ENCODE measurements at regions of chr20 and their contacts with region 1.

Region 1: GRCh38 chr20:736897-737296 is 31.4 kb downstream of the SLC52A3 start:
- DNase-seq: no peak

Region 2: DNA sequence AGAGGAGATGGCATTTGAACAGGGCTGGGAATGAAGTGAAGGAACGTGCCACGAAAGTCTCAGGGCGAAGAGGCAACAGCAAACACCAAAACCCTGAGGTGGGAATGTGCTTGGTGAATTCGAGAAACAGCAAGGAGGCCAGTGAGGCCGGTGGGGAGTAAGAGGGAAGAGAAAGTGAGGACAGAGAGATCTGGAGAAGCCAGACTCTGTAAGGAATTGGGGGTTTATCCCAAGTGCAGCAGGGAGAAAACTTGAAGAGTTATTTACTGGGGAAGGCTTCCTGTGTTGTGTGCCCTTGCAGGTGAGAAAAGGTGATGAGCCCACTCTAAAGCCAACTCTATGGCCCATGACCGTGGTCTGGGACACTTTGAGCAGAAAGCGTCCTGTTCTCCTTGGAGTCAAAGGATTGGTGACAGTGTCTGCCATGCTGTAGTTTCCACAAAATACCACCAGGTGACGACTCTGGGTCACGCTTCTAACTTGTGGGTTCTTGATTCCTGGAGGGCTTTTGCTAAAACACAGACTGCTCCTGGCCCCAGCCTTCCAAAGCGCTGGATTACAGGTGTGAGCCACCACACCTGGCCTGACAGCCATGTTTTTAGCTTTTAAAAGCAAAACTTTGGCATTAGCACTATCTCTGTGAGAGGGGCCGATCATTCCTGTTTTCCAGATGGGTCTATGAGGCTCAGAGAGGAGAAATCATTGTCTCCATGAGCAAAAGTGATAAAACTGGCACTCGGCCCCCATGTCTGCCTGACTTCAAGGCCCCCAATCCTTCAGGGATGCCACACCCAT is 175.3 kb before region 1 on chr20:
- intact Hi-C with region 1: loop called (anchors 5 kb)
- DNase-seq: peak in 41 of 42 donors; percentile 29 to 86 (median 67)

Region 3: GRCh38 chr20:805713-806112 is 68.8 kb after region 1 on chr20:
- intact Hi-C with region 1: no loop called
- DNase-seq: no peak